Tibial artery (tissue), 4 donors: ENCODE measurements at regions of chr1 and their contacts with region 1.

Region 1: GRCh38 chr1:214584805-214585766 is 17.9 kb upstream of the CENPF start:
- DNase-seq: no peak
- H3K4me3 ChIP-seq: no peak overlapping the region
- H3K27ac ChIP-seq: no peak overlapping the region
- H3K4me1 ChIP-seq: peaks cover 0 to 7% (median 2%) of the 10 kb centered on the region in 4 donors
- H3K27me3 ChIP-seq: no peaks in the 10 kb centered on the region
- CTCF ChIP-seq: peak; percentile 62 to 80

Region 2: DNA sequence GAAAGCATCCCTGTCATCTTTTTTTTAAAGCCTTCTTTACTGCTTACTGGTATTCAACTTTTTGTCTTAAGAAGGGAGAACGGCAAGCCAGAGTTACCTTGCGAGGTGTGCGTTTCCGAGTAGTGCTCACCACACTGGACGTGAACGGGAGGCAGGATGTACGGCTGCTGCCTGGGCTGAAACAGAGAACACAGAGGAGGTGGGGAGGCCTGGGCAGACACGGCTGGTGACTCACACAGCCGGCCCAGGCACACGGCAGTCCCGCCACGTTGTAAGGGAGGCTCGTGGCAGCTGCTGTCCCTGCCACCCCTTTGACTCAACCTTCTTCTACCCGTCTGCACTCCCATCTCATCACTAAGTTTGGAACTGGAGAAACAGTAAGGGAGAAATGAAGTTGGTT is 198.3 kb before region 1 on chr1:
- intact Hi-C with region 1: loop called (anchors 5 kb)
- DNase-seq: no peak
- H3K4me3 ChIP-seq: no peak overlapping the region
- H3K27ac ChIP-seq: peak overlapping the region; percentile 14 to 55
- H3K4me1 ChIP-seq: peaks cover 0 to 16% (median 2%) of the 10 kb centered on the region in 4 donors
- H3K27me3 ChIP-seq: no peaks in the 10 kb centered on the region
- CTCF ChIP-seq: no peak

Region 3: GRCh38 chr1:214767221-214767620 is 182.1 kb after region 1 on chr1:
- intact Hi-C with region 1: no loop called
- DNase-seq: no peak
- H3K4me3 ChIP-seq: no peak overlapping the region
- H3K27ac ChIP-seq: no peak overlapping the region
- H3K4me1 ChIP-seq: no peaks in the 10 kb centered on the region
- H3K27me3 ChIP-seq: no peaks in the 10 kb centered on the region
- CTCF ChIP-seq: no peak

Region 4: GRCh38 chr1:215071078-215071477 is 486.0 kb after region 1 on chr1:
- intact Hi-C with region 1: no loop called
- DNase-seq: no peak
- H3K4me3 ChIP-seq: no peak overlapping the region
- H3K27ac ChIP-seq: no peak overlapping the region
- H3K4me1 ChIP-seq: no peaks in the 10 kb centered on the region
- H3K27me3 ChIP-seq: no peaks in the 10 kb centered on the region
- CTCF ChIP-seq: no peak